ENCODE measurements at regions of chr2 and their contacts with region 1.

Region 1: GRCh38 chr2:118032169-118033013 is 18.5 kb upstream of the CCDC93 start:
- DNase-seq: no peak
- H3K4me3 ChIP-seq: no peak overlapping the region
- CTCF ChIP-seq: peak; percentile 69

Region 2: GRCh38 chr2:117745537-117745936 is 286.9 kb before region 1 on chr2:
- CTCF ChIA-PET with region 1: no interaction called
- POLR2A ChIA-PET with region 1: no interaction called
- DNase-seq: no peak
- H3K4me3 ChIP-seq: no peak overlapping the region
- CTCF ChIP-seq: no peak

Region 3: DNA sequence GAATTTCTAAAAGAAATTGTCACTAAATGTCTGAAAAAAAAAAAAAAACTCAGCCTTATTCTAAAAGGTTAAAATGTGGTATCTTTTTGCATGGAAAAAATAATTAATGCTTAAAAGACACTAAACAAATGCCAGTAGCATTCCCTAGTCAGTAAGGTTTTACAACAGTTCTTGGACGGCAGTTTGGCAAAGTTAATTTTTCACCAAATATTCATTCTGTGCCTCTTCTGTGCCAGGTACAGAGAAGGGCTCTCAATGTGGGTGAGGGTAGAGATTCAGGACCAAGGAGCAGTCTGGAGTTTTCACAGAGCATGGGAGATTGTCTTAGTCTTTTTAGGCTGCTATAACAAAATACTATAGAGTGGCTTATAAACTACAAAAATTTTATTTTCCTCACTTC is 12.6 kb before region 1 on chr2:
- CTCF ChIA-PET with region 1: interaction called, 18 read pairs
- POLR2A ChIA-PET with region 1: no interaction called
- DNase-seq: no peak
- H3K4me3 ChIP-seq: no peak overlapping the region
- CTCF ChIP-seq: no peak

Region 4: DNA sequence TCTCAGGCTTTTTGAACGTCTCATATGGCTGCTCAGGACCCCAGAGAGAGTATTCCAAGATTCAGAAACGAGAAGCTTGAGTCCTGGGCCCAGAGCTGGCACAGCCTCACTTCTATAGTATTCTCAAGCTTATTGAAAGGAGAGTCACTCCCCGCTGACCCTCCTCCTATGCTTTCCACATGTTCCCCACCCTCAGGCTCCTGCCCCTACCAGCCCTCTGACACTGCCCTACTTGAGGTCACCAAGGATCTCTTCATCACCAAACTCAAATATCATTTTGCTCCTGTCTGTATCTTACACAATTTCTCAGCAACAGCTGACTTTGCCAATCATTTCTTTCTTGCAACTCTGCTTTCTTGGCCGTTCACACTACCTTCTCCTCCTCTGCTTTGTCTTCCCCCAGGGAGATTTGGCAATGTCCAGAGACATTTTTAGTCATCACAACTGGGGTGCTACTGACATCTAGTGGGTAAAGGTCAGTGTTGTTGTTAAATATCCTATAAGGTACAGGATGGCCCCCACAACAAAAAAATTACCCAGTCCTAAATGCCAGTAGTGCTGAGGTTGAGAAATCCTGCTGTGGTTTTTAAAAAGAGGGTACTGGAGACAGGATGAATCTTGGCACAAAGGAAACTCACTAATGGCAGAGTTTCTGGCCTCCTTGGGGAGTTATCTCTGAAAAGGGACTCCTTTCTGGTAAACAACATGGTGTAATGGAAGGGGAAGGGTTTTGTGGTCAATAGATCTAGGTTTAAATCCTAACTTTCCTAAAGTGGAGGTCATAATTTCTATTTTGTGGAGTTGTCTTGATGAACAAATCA is 29.0 kb after region 1 on chr2:
- CTCF ChIA-PET with region 1: interaction called, 50 read pairs
- POLR2A ChIA-PET with region 1: no interaction called
- DNase-seq: no peak
- H3K4me3 ChIP-seq: no peak overlapping the region
- CTCF ChIP-seq: peak; percentile 36